Activated naive CD4-positive, alpha-beta T cell treated with anti-CD3 and anti-CD28 coated beads for 36 hours (primary cell): ENCODE measurements at regions of chr3 and their contacts with region 1.

Region 1: GRCh38 chr3:133578548-133579191 is 5.2 kb downstream of the CDV3 start:
- DNase-seq: no peak
- H3K4me3 Mint-ChIP-seq: peak overlapping the region; percentile 86
- H3K27ac Mint-ChIP-seq: peak overlapping the region; percentile 79
- H3K4me1 Mint-ChIP-seq: peaks cover 56% of the 10 kb centered on the region
- H3K27me3 Mint-ChIP-seq: no peaks in the 10 kb centered on the region

Region 2: DNA sequence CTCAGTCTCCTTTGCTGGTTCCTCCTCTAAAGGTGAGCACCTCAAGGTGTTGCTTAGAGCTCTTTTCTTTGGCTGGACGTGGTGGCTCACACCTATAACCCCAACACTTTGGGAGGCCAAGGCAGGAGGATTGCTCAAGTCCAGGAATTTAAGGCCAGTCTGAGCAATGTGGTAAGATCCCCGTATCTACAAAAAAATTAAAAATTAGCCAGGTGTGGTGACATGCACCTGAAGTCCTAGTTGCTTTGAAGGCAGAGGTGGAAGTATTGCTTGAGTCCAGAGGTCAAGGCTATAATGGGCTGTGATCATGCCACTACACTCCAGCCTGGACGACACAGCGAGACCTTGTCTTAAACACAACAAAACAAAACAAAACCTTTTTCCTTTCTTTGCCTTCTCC is 54.8 kb after region 1 on chr3:
- CTCF ChIA-PET with region 1: interaction called, 3 read pairs
- intact Hi-C with region 1: loop called (anchors 1 kb)
- DNase-seq: no peak
- H3K4me3 Mint-ChIP-seq: no peak overlapping the region
- H3K27ac Mint-ChIP-seq: no peak overlapping the region
- H3K4me1 Mint-ChIP-seq: peaks cover 3% of the 10 kb centered on the region
- H3K27me3 Mint-ChIP-seq: no peaks in the 10 kb centered on the region